PC-9 (cell line): ENCODE measurements at regions of chr5 and their contacts with region 1.

Region 1: DNA sequence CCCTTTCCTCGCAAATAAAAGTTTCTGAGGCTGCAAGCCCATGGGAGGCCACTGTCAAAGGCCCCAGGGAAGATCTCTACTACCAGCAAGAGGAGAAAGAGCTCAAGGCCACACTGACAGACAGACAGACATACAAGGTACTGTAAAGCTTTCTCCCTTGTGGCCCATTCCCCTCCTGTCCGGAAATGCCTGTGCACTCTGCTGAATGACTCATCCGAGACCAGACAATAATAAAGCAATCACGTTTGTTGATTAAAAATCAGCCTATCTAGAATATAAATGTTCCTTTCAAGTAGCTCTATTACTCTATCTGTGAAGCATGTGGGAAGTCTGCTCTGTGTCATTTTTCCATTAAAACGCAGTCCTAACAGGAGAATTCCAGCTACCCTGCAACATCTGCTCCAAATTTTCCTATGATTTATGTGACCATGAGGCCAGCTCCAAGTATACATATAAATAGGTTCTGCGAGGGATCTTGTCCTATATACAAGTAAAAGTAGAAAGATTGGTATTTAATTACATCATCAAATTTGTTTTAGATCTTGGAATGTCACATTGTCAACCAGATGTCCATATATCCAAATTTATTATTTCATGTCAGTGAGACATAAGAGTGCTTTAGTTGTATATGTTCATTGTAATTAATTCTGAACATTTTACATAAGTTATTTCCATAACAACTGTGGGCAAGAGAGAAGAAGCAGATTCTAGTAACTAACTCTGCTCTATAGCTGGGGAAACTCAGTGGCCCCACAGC is 34.7 kb upstream of the TGFBI start:
- DNase-seq: no peak
- H3K4me3 ChIP-seq: no peak overlapping the region
- H3K27ac ChIP-seq: no peak overlapping the region
- H3K4me1 ChIP-seq: no peaks in the 10 kb centered on the region
- H3K27me3 ChIP-seq: no peaks in the 10 kb centered on the region
- CTCF ChIP-seq: no peak

Region 2: DNA sequence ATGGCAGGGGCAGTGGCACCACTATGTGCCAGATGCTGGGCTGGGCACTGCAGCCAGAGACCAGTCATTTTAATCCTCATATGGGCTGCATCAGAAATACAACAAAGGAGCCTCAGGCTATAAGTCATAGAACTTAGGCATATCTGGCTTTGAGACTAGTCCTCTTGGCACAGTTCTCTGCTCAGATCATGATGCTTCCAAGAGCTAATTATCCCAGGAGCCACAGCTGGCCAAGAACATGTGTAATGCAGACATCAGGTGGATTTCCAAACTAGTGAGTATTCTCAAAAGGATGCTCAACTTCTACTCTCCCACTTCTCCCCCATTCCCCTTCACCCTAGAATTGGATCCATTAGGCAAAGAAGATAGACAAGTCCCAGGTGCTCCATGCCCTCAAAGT is 933.5 kb after region 1 on chr5:
- CTCF ChIA-PET with region 1: no interaction called
- POLR2A ChIA-PET with region 1: interaction called, 11 read pairs
- intact Hi-C with region 1: no loop called
- DNase-seq: no peak
- H3K4me3 ChIP-seq: no peak overlapping the region
- H3K27ac ChIP-seq: no peak overlapping the region
- H3K4me1 ChIP-seq: no peaks in the 10 kb centered on the region
- H3K27me3 ChIP-seq: no peaks in the 10 kb centered on the region
- CTCF ChIP-seq: no peak